MCF 10A (cell line): ENCODE measurements at regions of chr6 and their contacts with region 1.

Region 1: GRCh38 chr6:36340618-36341454 is 4.1 kb upstream of the BNIP5 start:
- DNase-seq: peak; percentile 60
- H3K4me3 Mint-ChIP-seq: no peak overlapping the region
- H3K27ac Mint-ChIP-seq: no peak overlapping the region
- H3K4me1 Mint-ChIP-seq: no peaks in the 10 kb centered on the region
- H3K27me3 Mint-ChIP-seq: peaks cover 44% of the 10 kb centered on the region
- CTCF ChIP-seq: peak; percentile 77

Region 2: DNA sequence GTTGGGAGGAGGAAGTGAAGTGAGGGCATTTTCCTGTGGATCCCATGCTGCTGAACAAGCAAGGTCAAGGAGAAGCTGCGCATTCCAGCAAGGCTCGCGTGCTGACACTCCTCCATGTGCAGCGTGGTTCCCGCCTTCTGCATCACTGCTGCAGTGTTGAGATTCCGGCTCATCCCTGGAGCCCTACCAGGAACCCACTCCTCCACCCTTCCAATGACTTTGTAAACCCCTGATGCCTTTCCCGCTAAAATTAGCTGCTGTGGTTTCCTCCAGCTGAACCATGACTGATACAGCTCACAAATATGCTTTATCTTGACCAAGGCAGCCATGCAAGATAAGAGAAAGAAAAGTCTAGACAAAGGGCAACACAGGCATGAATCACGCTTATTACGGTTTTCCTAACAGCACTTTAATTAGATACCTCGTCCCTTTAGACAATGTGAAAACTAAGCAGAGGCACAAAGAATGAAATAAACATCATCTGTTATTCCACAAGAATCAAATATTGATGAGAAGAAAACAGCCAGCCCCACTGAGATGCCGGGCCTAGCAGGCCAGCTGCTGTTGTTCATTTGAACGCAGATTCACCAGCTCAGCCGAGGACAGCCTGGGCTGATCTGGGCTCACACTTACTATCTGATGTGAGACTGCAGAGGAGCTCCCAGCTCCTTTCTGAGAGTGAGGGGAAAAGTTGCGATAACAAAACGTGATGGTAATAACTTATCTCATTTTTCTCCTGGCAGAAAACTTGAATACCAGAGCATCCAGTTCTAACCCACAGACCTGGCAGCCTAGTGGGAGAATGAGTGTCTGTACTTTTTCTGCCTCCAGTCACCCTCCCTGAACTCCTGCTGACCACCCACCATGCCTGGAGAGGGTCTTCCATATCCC is 10.1 kb after region 1 on chr6:
- CTCF ChIA-PET with region 1: interaction called, 43 read pairs
- POLR2A ChIA-PET with region 1: no interaction called
- intact Hi-C with region 1: no loop called
- DNase-seq: no peak
- H3K4me3 Mint-ChIP-seq: no peak overlapping the region
- H3K27ac Mint-ChIP-seq: no peak overlapping the region
- H3K4me1 Mint-ChIP-seq: peaks cover 6% of the 10 kb centered on the region
- H3K27me3 Mint-ChIP-seq: no peaks in the 10 kb centered on the region
- CTCF ChIP-seq: no peak

Region 3: GRCh38 chr6:36399970-36400369 is 59.1 kb after region 1 on chr6:
- CTCF ChIA-PET with region 1: no interaction called
- POLR2A ChIA-PET with region 1: no interaction called
- intact Hi-C with region 1: no loop called
- DNase-seq: no peak
- H3K4me3 Mint-ChIP-seq: no peak overlapping the region
- H3K27ac Mint-ChIP-seq: no peak overlapping the region
- H3K4me1 Mint-ChIP-seq: no peaks in the 10 kb centered on the region
- H3K27me3 Mint-ChIP-seq: peaks cover 11% of the 10 kb centered on the region
- CTCF ChIP-seq: no peak